ENCODE measurements at regions of chr5 and their contacts with region 1.

Region 1: DNA sequence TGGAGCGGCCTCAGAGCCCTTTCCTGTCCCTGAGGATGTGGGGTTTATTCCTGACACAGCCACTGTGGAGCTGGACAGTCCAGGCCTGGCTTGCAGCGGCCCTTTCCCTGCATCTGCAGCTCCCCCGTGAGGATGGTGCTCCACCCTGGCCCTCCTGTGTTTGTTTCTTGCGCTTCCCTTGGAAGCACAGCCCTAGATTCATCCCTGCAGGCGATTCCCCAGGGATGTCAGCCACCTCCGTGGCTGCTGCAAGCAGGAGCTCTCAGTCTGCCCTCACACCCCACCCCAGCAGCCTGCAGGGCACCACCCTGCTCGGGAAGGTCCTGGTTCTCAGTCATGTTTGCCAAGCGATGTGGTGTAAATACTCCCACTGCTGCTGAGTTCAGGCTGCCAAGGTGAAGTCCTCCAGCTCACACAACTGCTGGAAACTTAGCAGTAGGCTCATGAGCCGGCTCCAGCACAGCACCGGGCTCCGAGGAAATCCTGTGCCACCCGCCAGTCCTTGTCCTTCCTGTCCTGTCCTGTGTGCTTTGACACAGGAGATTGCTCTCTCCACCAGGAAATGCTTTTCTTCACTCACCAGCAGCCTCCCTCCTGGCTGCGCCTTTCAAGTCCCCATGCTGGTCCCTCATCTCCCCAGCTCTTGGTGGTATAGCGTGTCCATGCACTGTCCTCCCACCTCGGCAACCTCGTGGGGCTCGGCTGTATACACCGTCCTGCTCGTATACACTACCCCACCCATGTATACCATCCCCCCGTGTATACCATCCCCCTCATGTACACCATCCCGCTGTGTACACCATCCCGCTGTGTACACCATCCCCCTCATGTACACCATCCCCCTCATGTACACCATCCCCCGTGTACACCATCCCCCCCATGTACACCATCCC is 16.2 kb downstream of the ROPN1L start:
- DNase-seq: no peak
- H3K4me3 ChIP-seq: no peak overlapping the region
- H3K27ac ChIP-seq: no peak overlapping the region
- H3K4me1 ChIP-seq: no peaks in the 10 kb centered on the region
- H3K27me3 ChIP-seq: no peaks in the 10 kb centered on the region
- CTCF ChIP-seq: no peak
- POLR2A ChIP-seq: no peak

Region 2: DNA sequence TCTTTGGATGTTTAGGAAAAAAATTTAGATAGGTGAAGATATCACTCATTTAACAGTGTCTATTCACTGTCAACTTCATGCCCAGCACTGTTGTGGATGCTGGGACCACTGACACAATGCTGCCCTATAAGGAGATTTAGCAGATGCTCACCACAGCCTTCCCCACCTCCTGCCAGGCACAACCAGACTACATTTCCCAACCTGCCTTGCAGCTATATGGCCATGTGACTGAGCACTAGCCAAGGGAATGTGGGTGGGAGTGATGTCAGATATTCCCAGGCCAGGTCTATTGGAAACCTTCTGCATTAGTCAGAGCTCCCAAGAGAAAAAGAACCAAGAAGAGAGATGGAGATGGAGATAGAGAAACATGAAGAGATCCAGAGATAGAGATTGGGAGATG is 525.2 kb before region 1 on chr5:
- intact Hi-C with region 1: no loop called
- DNase-seq: no peak
- H3K4me3 ChIP-seq: no peak overlapping the region
- H3K27ac ChIP-seq: no peak overlapping the region
- H3K4me1 ChIP-seq: no peaks in the 10 kb centered on the region
- H3K27me3 ChIP-seq: no peaks in the 10 kb centered on the region
- CTCF ChIP-seq: no peak
- POLR2A ChIP-seq: no peak

Region 3: GRCh38 chr5:10627160-10627701 is 169.3 kb after region 1 on chr5:
- intact Hi-C with region 1: loop called (anchors 5 kb)
- DNase-seq: no peak
- H3K4me3 ChIP-seq: no peak overlapping the region
- H3K27ac ChIP-seq: peak overlapping the region in 1 of 2 donors; percentile 46
- H3K4me1 ChIP-seq: peaks cover 6% of the 10 kb centered on the region
- H3K27me3 ChIP-seq: no peaks in the 10 kb centered on the region
- CTCF ChIP-seq: no peak
- POLR2A ChIP-seq: no peak